ENCODE measurements at regions of chr14 and their contacts with region 1.

Region 1: GRCh38 chr14:60035177-60035576 is 56.5 kb upstream of the PCNX4 start:
- DNase-seq: no peak
- ATAC-seq: no peak

Region 2: GRCh38 chr14:59093902-59094301 is 941.3 kb before region 1 on chr14:
- intact Hi-C with region 1: loop called (anchors 5 kb)
- DNase-seq: no peak
- ATAC-seq: no peak